CD8-positive, alpha-beta T cell (primary cell): ENCODE measurements at regions of chr3 and their contacts with region 1.

Region 1: DNA sequence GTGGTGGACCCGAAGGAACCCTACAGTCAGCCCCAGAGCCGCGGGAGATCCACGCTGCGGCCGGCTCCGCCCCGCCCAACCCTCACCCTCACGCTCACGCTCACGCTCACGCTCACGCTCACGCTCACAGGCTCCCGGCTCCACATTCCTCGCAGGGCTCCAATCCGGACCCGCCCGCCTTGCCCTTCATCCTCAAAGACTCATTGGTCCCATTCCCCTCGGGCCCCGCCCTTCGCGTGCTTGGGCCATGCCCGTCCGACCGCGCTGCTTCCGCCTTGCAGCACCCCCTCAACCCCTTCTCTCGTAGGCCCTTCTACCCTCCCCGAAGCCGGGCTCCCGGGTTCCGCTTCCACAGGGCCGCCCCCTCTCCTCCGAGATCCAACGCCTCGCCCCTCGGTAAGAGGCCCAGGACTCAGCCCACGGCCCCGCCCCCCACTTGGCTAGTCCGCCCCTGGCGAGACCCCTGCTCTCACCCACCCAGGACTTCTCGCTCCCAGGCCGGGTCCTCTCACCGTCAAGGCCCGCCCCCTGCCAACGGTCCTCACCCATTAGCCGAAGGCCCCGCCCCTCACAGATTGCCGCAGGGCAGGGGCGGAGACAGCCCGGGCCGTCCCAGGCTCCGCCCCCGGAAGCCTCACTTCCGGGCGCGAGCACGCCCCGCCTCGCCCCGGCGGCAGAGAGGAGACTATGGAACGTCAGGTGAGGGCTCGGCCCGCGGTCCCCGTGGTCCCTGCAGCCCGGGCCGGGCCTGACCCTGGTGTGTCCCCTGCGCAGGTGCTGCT is at the start of gene APEH:
- DNase-seq: peak; percentile 92 to 99 (median 97)
- ATAC-seq: peak; percentile 85
- H3K4me3 ChIP-seq: peak within 1 kb of the TSS; percentile 78 to 92
- H3K4me3 Mint-ChIP-seq: peak within 1 kb of the TSS; percentile 95
- H3K27ac ChIP-seq: peak within 1 kb of the TSS; percentile 86 to 98
- H3K27ac Mint-ChIP-seq: peak within 1 kb of the TSS; percentile 97
- H3K4me1 ChIP-seq: peaks cover 20% of the 10 kb centered on the region
- H3K4me1 Mint-ChIP-seq: peaks cover 36% of the 10 kb centered on the region
- H3K27me3 ChIP-seq: no peaks in the 10 kb centered on the region
- H3K27me3 Mint-ChIP-seq: no peaks in the 10 kb centered on the region
- CTCF ChIP-seq: no peak
- total RNA-seq, gene APEH: 40.8 to 48.9 TPM

Region 2: GRCh38 chr3:49411968-49412631 is 261.8 kb before region 1 on chr3 and contains the starts of genes RHOA and TCTA:
- CTCF ChIA-PET with region 1: no interaction called
- POLR2A ChIA-PET with region 1: no interaction called
- intact Hi-C with region 1: loop called (anchors 2 to 5 kb)
- DNase-seq: peak; percentile 97 to 100 (median 99)
- ATAC-seq: peak; percentile 85
- H3K4me3 ChIP-seq: peak within 1 kb of the TSS; percentile 81 to 91
- H3K4me3 Mint-ChIP-seq: peak within 1 kb of the TSS; percentile 94
- H3K27ac ChIP-seq: peak within 1 kb of the TSS; percentile 89 to 94
- H3K27ac Mint-ChIP-seq: peak within 1 kb of the TSS; percentile 98
- H3K4me1 ChIP-seq: peaks cover 70% of the 10 kb centered on the region
- H3K4me1 Mint-ChIP-seq: peaks cover 70% of the 10 kb centered on the region
- H3K27me3 ChIP-seq: no peaks in the 10 kb centered on the region
- H3K27me3 Mint-ChIP-seq: no peaks in the 10 kb centered on the region
- CTCF ChIP-seq: no peak
- total RNA-seq, gene RHOA: 271 to 294 TPM
- total RNA-seq, gene TCTA: 19.8 to 21.1 TPM

Region 3: GRCh38 chr3:49553692-49554632 is 119.9 kb before region 1 on chr3 and contains the start of gene BSN:
- CTCF ChIA-PET with region 1: interaction called, 13 read pairs
- POLR2A ChIA-PET with region 1: interaction called, 12 read pairs
- intact Hi-C with region 1: loop called in 1 of 2 experiments (anchors 1 kb)
- DNase-seq: peak; percentile 72 to 95 (median 93)
- ATAC-seq: peak; percentile 90
- H3K4me3 ChIP-seq: peak within 1 kb of the TSS; percentile 65 to 97
- H3K4me3 Mint-ChIP-seq: peak within 1 kb of the TSS; percentile 89
- H3K27ac ChIP-seq: peak within 1 kb of the TSS in 1 of 2 experiments; percentile 38
- H3K27ac Mint-ChIP-seq: peak within 1 kb of the TSS; percentile 64
- H3K4me1 ChIP-seq: peaks cover 13% of the 10 kb centered on the region
- H3K4me1 Mint-ChIP-seq: peaks cover 17% of the 10 kb centered on the region
- H3K27me3 ChIP-seq: peaks cover 0 to 2% of the 10 kb centered on the region in 2 experiments
- H3K27me3 Mint-ChIP-seq: peaks cover 21% of the 10 kb centered on the region
- CTCF ChIP-seq: no peak
- total RNA-seq, gene BSN: 0.17 to 0.35 TPM

Region 4: DNA sequence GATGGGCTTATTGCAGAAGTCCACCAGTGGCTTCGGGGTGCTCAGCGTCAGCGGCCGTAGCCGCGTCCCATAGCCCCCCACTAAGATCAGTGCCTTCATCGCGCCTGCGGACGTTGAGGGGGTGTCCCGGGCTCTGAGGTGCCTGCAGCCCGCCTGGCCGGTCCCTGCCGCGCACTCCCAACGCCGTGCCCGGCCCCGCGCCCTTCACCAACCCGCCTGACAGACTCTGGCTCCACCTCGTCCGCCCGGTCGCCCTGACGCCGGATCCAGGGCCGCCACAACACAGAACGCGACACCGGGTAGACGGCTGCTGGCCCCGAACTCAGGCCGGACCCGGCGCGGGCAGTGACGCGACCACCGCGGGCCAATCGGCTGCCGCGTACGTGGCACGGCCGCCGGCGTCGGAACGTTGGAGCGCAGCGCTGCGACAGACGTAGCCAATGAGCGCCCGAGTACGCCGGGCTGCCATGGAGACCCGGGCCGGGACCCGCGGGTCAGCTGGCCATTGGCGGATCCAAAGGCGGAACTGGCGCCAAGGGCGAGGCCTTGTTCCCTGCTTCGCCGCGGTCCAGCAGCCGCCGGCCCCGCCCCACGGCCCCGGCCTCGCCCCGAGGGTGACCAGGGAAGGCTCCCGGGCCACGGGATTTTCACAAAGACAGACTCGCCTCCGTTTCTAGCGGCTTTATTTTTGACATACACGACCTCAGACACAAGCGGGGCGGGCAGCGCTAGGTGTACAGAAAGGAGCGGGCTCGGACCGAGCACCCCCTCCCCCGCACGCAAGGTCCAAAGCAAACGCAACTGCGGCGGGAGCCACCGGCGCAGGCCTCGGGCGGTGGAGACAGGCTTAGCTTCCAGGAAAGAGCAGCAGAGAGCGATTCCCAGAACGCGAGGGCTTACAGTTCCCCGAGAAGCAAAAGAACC is 50.0 kb after region 1 on chr3 and contains the start of gene GMPPB:
- CTCF ChIA-PET with region 1: no interaction called
- POLR2A ChIA-PET with region 1: no interaction called
- intact Hi-C with region 1: loop called (anchors 1 kb)
- DNase-seq: peak; percentile 82 to 95 (median 91)
- ATAC-seq: peak; percentile 72
- H3K4me3 ChIP-seq: peak within 1 kb of the TSS; percentile 91 to 95
- H3K4me3 Mint-ChIP-seq: peak within 1 kb of the TSS; percentile 86
- H3K27ac ChIP-seq: peak within 1 kb of the TSS; percentile 84 to 93
- H3K27ac Mint-ChIP-seq: peak within 1 kb of the TSS; percentile 90
- H3K4me1 ChIP-seq: peaks cover 19% of the 10 kb centered on the region
- H3K4me1 Mint-ChIP-seq: peaks cover 36% of the 10 kb centered on the region
- H3K27me3 ChIP-seq: no peaks in the 10 kb centered on the region
- H3K27me3 Mint-ChIP-seq: no peaks in the 10 kb centered on the region
- CTCF ChIP-seq: no peak
- total RNA-seq, gene GMPPB: 34.9 to 36.6 TPM

Region 5: DNA sequence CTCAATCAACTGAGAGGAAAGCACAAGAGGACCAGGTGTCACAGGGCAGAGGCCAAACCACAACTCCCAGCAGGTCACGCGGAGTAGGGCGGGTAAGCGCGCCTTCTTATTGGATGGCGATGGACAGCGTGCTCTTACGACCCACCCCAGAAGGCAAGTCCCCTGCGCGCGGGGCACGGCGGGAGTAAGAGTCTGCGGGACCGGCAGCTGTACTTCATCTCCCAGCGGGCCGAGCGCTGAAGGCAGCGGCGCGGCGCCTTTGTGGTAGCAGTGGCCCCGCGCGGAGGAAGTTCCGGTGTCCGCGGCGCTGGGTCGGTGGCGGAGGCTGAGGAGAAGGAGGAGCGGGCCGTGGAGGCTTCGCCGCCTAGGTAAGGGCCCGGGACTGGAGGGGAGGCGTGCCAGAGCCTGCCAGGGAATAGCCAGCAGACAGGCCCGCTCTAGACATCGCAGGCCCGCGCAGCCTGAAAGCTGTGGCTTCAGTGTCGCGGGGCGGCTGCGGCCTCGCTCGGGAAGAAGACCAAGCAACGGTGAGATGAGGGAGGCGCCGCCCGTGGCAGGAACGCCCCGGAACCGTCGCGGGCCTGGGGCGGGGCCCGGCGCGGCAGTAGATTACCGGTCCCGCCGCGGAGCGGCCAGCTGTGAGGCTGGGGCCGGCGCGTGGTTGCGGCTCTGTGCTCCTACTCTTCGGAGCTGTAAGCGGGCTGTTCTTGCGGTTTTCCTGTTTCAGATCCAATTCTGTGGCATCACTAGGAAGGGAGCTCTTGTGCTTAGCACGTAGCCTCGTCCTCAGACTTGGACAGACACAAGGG is 266.2 kb after region 1 on chr3 and contains the start of gene RBM6:
- CTCF ChIA-PET with region 1: no interaction called
- POLR2A ChIA-PET with region 1: no interaction called
- intact Hi-C with region 1: loop called in 1 of 2 experiments (anchors 2 kb)
- DNase-seq: peak; percentile 82 to 97 (median 93)
- ATAC-seq: peak; percentile 98
- H3K4me3 ChIP-seq: peak within 1 kb of the TSS; percentile 78 to 98
- H3K4me3 Mint-ChIP-seq: peak within 1 kb of the TSS; percentile 99
- H3K27ac ChIP-seq: peak within 1 kb of the TSS; percentile 67 to 99
- H3K27ac Mint-ChIP-seq: peak within 1 kb of the TSS; percentile 98
- H3K4me1 ChIP-seq: peaks cover 15% of the 10 kb centered on the region
- H3K4me1 Mint-ChIP-seq: peaks cover 30% of the 10 kb centered on the region
- H3K27me3 ChIP-seq: no peaks in the 10 kb centered on the region
- H3K27me3 Mint-ChIP-seq: no peaks in the 10 kb centered on the region
- CTCF ChIP-seq: no peak
- total RNA-seq, gene RBM6: 92.1 to 95.0 TPM